Mammary epithelial cell (primary cell): ENCODE measurements at regions of chr14 and their contacts with region 1.

Region 1: DNA sequence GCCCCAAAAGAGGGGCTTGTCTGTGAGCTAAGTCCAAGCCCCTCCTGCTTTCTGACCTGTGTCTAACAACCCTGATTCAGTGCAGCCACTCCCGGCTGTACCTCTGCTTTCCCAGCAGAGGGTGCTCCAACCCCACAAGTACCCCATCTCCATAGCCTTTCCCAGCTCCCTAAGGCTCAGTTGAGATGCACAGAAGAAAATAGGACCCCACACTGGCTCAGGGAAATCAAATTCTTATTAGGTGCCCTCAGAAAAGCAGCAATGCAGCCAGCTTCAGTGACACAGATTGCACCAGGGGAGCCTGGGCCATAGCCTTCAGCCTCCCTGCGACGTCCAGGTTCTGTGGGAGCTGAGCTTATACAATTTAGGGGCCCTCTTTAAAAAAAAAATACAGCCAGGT is 49.9 kb downstream of the LRRC74A start:
- DNase-seq: peak; percentile 63
- H3K4me3 ChIP-seq: no peak overlapping the region
- H3K27ac ChIP-seq: no peak overlapping the region
- H3K4me1 ChIP-seq: no peaks in the 10 kb centered on the region
- H3K27me3 ChIP-seq: no peaks in the 10 kb centered on the region
- CTCF ChIP-seq: peak; percentile 96 to 98

Region 2: GRCh38 chr14:76710056-76711010 is 165.7 kb before region 1 on chr14:
- CTCF ChIA-PET with region 1: no interaction called
- dilution Hi-C with region 1: no loop called
- in situ Hi-C with region 1: no loop called
- intact Hi-C with region 1: loop called (anchors 5 kb)
- DNase-seq: peak; percentile 20
- H3K4me3 ChIP-seq: no peak overlapping the region
- H3K27ac ChIP-seq: no peak overlapping the region
- H3K4me1 ChIP-seq: no peaks in the 10 kb centered on the region
- H3K27me3 ChIP-seq: no peaks in the 10 kb centered on the region
- CTCF ChIP-seq: peak; percentile 69 to 77

Region 3: GRCh38 chr14:76904740-76905438 is 28.8 kb after region 1 on chr14:
- CTCF ChIA-PET with region 1: interaction called, 3 read pairs
- dilution Hi-C with region 1: no loop called
- in situ Hi-C with region 1: no loop called
- intact Hi-C with region 1: loop called (anchors 2 kb)
- DNase-seq: peak; percentile 98
- H3K4me3 ChIP-seq: no peak overlapping the region
- H3K27ac ChIP-seq: peak overlapping the region; percentile 58
- H3K4me1 ChIP-seq: peaks cover 41% of the 10 kb centered on the region
- H3K27me3 ChIP-seq: no peaks in the 10 kb centered on the region
- CTCF ChIP-seq: no peak

Region 4: DNA sequence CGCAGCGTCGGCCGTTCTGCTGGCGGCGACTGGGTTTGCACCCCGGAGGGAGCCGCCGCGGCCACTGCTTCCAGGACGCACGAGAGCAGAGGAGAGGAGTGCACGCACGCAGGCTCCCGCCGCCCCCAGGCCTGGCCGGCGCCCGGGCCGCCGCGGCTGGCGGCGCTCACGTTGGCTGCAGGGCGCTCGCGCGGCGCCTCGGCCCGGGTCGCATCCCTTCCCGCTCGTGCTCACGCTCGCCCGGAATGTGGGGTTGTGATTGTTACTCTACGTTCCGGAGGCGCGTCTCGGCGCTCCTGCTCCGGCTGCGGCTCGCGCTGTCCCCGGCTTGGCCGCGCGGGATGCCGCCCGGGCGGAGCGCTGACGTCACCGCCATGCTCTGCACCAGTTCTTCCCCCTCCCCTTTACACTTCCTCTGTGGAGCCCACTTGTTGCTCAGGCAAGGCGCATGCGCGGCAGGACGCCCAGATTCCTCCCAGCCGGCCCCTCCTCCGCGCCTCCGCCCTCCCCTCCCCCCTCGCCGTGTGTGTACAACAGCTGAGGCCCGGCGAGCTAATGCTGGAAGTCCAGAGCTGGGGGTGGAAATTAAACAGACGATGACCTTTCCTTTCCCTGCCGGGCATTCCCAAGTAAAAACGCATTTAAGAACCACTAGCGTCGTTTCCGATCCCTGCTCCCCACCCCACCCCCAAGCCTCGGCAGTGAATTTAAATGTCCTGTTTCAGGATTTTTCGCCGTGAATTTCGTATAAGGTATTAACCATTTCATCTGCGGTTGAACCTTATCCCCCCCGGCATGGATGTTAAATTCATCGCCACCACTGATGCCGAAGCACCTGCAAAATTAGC is 152.5 kb after region 1 on chr14 and contains the start of gene IRF2BPL:
- CTCF ChIA-PET with region 1: interaction called, 10 read pairs
- dilution Hi-C with region 1: no loop called
- in situ Hi-C with region 1: no loop called
- intact Hi-C with region 1: loop called (anchors 1 kb)
- DNase-seq: peak; percentile 96
- H3K4me3 ChIP-seq: peak within 1 kb of the TSS; percentile 56 to 88 (median 79)
- H3K27ac ChIP-seq: peak within 1 kb of the TSS; percentile 81
- H3K4me1 ChIP-seq: peaks cover 48% of the 10 kb centered on the region
- H3K27me3 ChIP-seq: no peaks in the 10 kb centered on the region
- CTCF ChIP-seq: no peak
- total RNA-seq, gene IRF2BPL: 41.3 to 49.4 TPM

Region 5: GRCh38 chr14:77097700-77098528 is 221.8 kb after region 1 on chr14 and contains the start of gene CIPC:
- CTCF ChIA-PET with region 1: interaction called, 4 read pairs
- dilution Hi-C with region 1: no loop called
- in situ Hi-C with region 1: no loop called
- intact Hi-C with region 1: loop called (anchors 1 kb)
- DNase-seq: peak; percentile 99
- H3K4me3 ChIP-seq: peak within 1 kb of the TSS; percentile 84 to 96 (median 91)
- H3K27ac ChIP-seq: peak within 1 kb of the TSS; percentile 93
- H3K4me1 ChIP-seq: peaks cover 18% of the 10 kb centered on the region
- H3K27me3 ChIP-seq: no peaks in the 10 kb centered on the region
- CTCF ChIP-seq: no peak
- total RNA-seq, gene CIPC: 11.6 to 30.2 TPM

Region 6: DNA sequence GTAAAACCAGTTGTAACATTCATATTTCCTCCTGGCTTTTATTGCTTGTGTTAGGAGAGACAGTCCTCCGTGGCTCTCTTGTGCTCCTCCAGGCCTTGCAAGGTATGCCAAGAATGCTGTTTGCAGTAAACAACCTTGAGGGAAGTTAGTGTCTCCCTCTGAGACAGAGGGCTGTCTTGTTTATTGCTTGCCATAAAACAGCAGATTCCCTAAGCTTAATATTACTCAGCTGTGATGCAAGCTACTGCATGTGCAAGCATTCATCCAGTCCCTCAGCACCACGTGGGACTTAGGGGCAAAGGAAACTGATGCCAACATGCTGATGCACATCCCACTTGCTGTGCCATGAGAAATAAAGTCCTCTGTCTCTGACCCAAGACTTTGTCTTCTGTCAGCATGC is 438.0 kb after region 1 on chr14:
- CTCF ChIA-PET with region 1: no interaction called
- dilution Hi-C with region 1: no loop called
- in situ Hi-C with region 1: no loop called
- intact Hi-C with region 1: loop called (anchors 5 kb)
- DNase-seq: peak; percentile 93
- H3K4me3 ChIP-seq: no peak overlapping the region
- H3K27ac ChIP-seq: peak overlapping the region; percentile 31
- H3K4me1 ChIP-seq: peaks cover 45% of the 10 kb centered on the region
- H3K27me3 ChIP-seq: no peaks in the 10 kb centered on the region
- CTCF ChIP-seq: no peak